GM12878 (cell line): ENCODE measurements at regions of chr19 and their contacts with region 1.

Region 1: GRCh38 chr19:12757544-12758274 is 6.1 kb downstream of the BEST2 start:
- DNase-seq: no peak
- ATAC-seq: peak; percentile 93
- H3K4me3 ChIP-seq: peak overlapping the region; percentile 32; the same call in 1 of the 2 replicates
- H3K27ac ChIP-seq: no peak overlapping the region
- H3K4me1 ChIP-seq: no peaks in the 10 kb centered on the region
- H3K27me3 ChIP-seq: peaks cover 0 to 2% of the 10 kb centered on the region in 2 experiments; a peak in 1 of 4 replicates
- CTCF ChIP-seq: peak; percentile 82 to 91 (median 89)
- EP300 ChIP-seq: no peak
- POLR2A ChIP-seq: no peak
- RAD21 ChIP-seq: peak; percentile 49

Region 2: DNA sequence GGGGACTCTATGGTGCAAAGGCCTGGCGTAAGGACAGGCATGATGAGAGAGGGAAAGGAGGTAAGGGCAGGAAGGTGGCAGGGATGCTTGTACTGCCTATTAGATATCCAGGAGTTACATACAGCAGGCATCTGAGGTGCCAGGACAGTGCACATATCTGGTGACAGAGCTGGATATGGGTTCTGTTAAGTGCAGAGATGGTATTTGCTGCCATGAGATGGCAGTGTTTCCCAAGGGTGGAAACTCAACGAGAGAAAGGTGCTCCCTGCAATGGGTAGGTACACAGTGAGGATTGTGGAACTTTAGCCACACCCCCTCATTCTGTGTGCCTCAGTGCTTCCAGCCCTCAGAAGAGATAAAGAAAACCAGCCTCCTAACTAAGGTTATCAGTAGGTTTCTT is 40.8 kb before region 1 on chr19:
- CTCF ChIA-PET with region 1: interaction called, 27 read pairs
- POLR2A ChIA-PET with region 1: interaction called, 3 read pairs
- RAD21 ChIA-PET with region 1: interaction called, 7 read pairs
- SMC1A ChIA-PET with region 1: interaction called, 6 read pairs
- in situ Hi-C with region 1: no loop called
- intact Hi-C with region 1: loop called (anchors 1 kb)
- DNase-seq: no peak
- ATAC-seq: peak; percentile 78
- H3K4me3 ChIP-seq: no peak overlapping the region
- H3K27ac ChIP-seq: no peak overlapping the region
- H3K4me1 ChIP-seq: 0 out of 2 replicates have a peak, but pooled peaks cover 4% of the 10 kb centered on the region
- H3K27me3 ChIP-seq: no peaks in the 10 kb centered on the region
- CTCF ChIP-seq: peak; percentile 45 to 64 (median 48); a peak in 5 of 6 replicates
- EP300 ChIP-seq: no peak
- POLR2A ChIP-seq: no peak
- RAD21 ChIP-seq: peak; percentile 50; the same call in 1 of the 2 replicates

Region 3: GRCh38 chr19:12736995-12737834 is 20.5 kb before region 1 on chr19 and contains the start of gene GET3:
- CTCF ChIA-PET with region 1: interaction called, 13 read pairs
- POLR2A ChIA-PET with region 1: no interaction called
- RAD21 ChIA-PET with region 1: interaction called, 7 read pairs
- SMC1A ChIA-PET with region 1: interaction called, 4 read pairs
- in situ Hi-C with region 1: no loop called
- intact Hi-C with region 1: no loop called
- DNase-seq: peak; percentile 99
- ATAC-seq: peak; percentile 92
- H3K4me3 ChIP-seq: peak within 1 kb of the TSS; percentile 90
- H3K27ac ChIP-seq: peak within 1 kb of the TSS; percentile 98
- H3K4me1 ChIP-seq: peaks cover 19% of the 10 kb centered on the region
- H3K27me3 ChIP-seq: no peaks in the 10 kb centered on the region
- CTCF ChIP-seq: no peak
- EP300 ChIP-seq: no peak
- POLR2A ChIP-seq: peak; percentile 93
- RAD21 ChIP-seq: no peak
- polyA plus RNA-seq, gene GET3: 14.5 to 22.0 TPM

Region 4: DNA sequence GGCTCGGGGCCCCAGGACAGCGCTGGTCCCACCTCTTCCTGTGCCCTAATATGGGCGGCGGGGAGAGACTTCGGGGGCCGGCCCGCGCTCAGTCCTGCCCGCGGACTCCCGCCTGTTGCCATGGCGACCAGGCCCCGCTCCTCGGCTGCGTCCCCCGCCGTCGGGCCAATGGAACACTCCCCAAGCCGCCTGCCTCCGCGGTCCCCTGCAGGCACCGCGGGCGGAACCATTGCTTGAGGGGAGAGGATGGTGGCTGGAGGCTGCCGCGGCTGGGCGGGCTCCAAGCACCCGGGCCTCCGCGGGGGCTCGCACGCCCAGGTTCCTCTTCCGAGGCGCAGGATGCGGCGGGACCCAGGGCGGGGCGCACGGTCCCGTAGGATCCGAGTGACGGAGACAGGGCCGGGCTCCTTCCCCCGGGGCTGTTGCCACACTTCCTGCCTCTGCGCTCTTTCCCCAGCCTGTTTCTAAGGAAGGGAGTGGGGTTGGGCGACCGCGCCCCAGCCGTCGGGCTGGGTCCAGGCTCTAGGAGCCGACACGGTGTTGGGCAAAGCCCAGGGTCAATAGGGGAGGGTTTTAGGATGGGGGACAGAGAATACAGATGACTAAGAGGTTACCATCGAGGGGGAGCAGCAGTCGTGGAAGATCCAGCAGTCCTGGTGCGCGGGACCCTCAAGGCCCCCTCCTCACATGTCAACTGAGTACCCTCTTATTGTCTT is 32.4 kb after region 1 on chr19:
- CTCF ChIA-PET with region 1: interaction called, 426 read pairs
- POLR2A ChIA-PET with region 1: no interaction called
- RAD21 ChIA-PET with region 1: no interaction called
- SMC1A ChIA-PET with region 1: interaction called, 31 read pairs
- in situ Hi-C with region 1: loop called (anchors 5 kb)
- intact Hi-C with region 1: no loop called
- DNase-seq: peak; percentile 86
- ATAC-seq: peak; percentile 53
- H3K4me3 ChIP-seq: peak overlapping the region; percentile 87
- H3K27ac ChIP-seq: peak overlapping the region; percentile 99
- H3K4me1 ChIP-seq: peaks cover 47% of the 10 kb centered on the region
- H3K27me3 ChIP-seq: no peaks in the 10 kb centered on the region
- CTCF ChIP-seq: no peak
- EP300 ChIP-seq: 0 out of 4 replicates have a peak, but pooled peaks of 1 of the 2 experiments have one; percentile 9
- POLR2A ChIP-seq: no peak
- RAD21 ChIP-seq: no peak